ENCODE measurements at regions of chr1 and their contacts with region 1.

Region 1: DNA sequence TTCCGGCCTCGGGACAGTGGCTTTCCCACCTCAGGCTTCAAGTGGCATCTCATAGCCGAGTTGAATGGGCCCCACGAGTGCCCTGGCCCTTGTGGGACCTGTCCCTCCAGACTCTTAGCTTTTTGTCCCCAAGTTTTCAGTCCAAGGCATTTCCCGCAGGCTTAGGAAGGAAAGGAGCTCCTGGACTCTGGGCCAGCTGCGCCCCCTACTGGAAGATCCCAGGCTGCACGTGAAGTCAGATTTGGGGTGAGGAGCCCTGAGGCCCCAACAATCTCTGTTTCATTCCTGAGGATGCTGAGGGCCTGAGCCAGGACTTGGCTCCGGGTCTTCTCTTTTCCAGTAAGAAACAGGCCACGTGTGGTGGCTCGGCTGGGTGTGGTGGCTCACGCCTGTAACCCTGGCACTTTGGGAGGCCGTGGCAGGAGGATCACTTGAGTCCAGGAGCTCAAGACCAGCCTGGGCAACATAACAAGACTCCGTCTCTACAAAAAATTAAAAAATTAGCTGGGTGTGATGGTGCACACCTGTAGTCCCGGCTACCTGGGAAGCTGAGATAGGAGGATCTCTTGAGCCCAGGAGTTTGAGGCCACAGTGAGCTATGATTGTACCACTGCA is 67.4 kb downstream of the ARHGEF10L start:
- DNase-seq: peak; percentile 80
- CTCF ChIP-seq: peak; percentile 93

Region 2: GRCh38 chr1:17335821-17336710 is 270.9 kb before region 1 on chr1:
- CTCF ChIA-PET with region 1: no interaction called
- POLR2A ChIA-PET with region 1: no interaction called
- DNase-seq: peak; percentile 62
- CTCF ChIP-seq: peak; percentile 70

Region 3: DNA sequence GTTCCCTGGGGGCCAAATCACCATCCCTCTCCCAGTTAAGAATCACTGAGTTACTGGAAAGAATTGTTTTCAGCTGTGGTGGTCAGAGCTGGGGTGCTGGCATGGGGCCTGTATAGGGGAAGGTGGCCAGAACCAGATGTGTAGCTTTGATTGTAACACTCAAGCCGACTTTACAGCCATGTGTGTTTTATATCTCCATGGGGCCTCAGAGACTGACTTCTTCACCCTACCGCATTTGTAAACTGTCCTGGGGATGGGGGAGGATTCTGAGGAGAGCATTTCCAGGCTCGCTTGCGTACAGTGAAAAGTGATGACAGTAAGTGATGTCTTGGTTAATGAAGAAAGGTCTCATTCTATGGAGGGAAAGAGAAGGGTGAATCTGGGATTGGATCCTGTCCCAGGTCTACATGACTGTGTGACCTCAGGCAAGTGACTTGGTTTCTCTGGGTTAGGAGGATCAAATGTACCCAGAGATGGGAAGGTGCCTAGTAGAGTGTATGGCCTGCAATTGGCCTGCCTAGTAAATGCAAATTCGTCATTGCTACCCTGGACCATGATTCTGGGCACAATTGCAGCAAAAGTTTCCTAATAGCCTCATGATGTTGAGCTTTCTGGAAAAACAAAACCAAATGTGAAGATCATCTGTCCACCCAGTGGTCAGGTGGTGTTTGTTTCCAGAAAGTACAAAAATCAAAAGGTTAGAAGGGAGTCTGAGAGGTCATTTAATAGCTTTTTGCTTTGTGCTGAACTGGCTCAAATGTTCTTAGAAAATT is 117.8 kb before region 1 on chr1:
- CTCF ChIA-PET with region 1: interaction called, 88 read pairs
- POLR2A ChIA-PET with region 1: no interaction called
- DNase-seq: no peak
- CTCF ChIP-seq: no peak

Region 4: DNA sequence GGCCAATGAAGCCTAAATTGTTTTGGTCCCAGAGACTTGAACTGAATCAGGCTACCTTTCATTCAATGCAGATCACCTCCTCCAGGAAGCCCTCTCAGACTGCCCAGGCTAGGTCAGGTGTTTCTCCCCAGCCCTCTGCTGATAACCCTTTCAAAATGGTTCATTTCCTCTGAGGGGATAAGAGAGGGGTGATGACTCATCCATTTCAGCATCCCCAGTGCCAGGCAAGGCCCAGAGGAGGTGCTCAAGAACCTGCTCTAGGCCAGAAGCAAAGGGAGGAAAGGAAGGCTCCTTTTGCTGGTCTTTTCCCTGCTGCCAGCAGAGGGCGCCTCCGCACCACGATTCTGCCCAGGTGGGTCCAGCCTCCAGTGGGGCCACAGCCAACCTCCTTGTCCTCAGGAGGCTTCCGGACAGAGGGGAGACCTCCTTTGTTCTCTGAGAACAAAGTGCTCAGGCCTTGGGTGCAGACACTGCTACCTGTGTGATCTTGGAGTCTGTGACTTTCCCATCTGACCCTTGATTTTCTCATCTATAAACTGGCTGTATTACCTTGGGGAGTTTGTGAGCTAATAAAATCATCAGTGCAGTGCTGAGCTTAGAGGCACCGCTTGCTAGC is 112.7 kb before region 1 on chr1:
- CTCF ChIA-PET with region 1: interaction called, 88 read pairs
- POLR2A ChIA-PET with region 1: no interaction called
- DNase-seq: peak; percentile 82
- CTCF ChIP-seq: peak; percentile 94

Region 5: DNA sequence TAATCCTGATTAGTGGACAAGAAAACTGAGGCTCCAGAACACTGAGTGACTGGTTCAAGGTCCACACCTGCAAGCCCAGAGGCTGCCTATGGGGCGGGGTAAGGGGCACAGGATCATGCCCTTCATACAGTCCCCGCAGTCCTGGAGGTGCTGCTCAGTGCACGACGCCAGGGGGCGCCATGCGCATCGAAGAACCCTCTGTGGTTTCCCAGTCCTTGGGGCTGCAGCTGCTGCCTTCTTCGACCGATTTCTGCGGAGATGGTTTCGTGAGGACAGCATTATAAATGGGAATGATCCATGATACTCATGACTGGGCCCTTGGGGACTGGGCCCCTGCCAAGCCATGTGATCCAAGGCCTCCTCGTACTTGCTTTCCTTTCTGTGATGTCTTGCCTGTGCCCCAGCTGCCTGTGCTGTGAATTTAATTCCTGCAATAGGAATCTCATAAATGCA is 104.6 kb before region 1 on chr1:
- CTCF ChIA-PET with region 1: interaction called, 206 read pairs
- POLR2A ChIA-PET with region 1: no interaction called
- DNase-seq: peak; percentile 77
- CTCF ChIP-seq: peak; percentile 89

Region 6: DNA sequence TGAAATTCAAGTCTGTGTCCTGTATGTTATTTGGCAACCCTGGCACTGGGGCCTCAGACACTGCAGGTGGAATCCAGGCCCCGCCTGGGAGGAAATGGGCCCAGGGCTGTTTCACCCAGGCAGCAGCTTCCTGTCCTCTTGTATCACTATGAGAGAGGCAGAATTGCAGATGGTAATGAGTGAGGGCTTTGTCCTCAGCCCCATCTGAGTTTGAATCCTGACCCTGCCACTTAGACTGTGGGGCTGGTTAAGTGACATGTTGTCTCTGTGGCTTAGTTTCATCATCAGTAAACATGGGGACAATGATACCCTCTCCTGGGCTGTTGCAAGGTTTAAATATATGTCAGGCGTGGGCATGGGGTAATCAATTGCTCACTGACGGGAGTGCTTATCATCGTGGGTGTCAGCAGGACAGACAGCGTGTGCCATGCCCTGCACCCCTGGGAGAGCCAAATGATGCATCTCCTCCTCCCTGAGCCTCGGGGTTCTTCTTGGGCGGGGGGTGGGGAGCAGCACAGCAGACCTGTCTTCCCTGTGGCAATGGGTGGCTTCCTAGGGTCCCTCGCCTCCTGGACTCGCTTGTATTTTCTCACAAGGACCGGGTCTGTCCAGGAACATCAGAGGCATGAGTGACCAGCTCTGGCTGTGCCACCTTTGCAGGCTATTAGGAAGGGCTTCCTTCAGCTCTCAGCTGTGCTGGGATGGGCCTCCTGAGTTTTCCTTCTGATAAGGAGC is 25.4 kb before region 1 on chr1:
- CTCF ChIA-PET with region 1: interaction called, 17 read pairs
- POLR2A ChIA-PET with region 1: no interaction called
- DNase-seq: peak; percentile 42
- CTCF ChIP-seq: no peak

Region 7: DNA sequence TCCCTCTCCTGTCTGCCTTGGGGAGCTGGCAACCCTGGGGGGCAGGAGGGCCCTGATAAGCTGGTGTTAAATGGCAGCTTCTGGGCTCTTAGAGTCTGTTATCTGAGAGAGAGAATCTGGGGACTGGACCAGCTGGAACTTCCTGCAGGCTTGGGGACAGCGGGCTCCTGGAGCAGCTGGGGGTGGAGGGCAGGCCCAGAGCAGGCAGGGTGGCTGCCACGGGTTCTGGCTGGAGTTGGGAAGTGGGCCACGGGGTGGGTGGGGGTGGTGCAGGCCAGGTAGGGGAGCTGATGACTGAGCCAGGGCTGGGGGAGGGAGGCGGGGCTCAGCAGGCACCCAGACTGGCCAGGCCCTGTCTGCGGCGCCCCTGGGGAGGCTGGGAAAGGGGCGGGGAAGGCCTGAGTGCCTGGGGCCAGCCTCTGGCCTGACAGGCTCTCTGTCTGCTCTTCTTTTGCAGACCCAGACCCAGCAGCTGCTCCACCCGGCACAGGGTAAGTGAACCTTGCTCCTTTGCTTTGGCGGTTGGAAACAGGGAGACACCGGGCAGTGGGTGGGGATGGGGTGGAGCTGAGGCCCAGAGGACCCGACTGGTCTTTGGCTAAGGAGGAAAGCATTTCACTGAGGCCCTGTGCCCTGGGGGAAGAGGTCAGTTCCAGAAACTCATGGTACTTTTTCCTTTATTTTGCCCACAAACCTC is 18.8 kb before region 1 on chr1:
- CTCF ChIA-PET with region 1: interaction called, 17 read pairs
- POLR2A ChIA-PET with region 1: no interaction called
- DNase-seq: no peak
- CTCF ChIP-seq: no peak

Region 8: DNA sequence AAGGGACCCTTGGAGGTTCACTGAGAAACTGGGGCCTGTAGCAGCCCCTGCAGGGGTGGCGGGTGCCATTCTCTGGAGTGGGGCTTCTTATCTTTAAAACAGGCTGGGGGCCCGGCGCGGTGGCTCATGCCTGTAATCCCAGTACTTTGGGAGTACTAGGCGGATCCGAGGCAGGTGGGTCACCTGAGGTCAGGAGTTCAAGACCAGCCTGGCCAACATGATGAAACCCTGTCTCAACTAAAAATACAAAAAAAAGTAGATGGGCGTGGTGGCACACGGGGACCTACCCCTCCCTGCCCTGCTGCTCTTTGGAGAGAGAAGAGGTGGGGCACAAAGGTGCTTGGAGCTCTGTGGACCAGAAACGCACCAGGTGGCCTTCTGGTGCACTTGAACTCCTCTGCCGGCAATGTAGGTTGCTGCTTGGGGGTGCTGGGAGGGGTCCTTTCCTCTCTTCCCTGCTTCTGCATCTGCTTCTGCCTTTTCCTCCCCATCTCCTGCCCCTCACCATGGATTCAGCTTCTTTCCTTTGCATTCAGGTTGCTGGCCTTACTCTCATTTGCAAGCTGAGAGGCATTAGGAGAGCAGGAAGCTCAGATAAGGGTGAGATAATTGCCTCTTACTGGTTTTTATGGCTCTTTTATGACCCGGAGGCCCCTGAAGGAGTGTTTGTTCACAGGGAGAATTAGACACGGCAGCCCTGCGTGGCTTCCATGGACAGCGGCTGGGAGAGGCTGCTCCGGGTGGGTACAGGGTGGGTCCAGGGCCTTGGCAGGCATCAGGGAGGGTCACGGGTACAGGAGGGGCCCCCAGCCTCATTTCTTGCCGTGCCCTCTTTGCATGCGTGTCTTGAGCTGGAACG is 10.1 kb before region 1 on chr1:
- CTCF ChIA-PET with region 1: interaction called, 13 read pairs
- POLR2A ChIA-PET with region 1: no interaction called
- DNase-seq: no peak
- CTCF ChIP-seq: no peak